ENCODE measurements at regions of chrX and their contacts with region 1.

Region 1: DNA sequence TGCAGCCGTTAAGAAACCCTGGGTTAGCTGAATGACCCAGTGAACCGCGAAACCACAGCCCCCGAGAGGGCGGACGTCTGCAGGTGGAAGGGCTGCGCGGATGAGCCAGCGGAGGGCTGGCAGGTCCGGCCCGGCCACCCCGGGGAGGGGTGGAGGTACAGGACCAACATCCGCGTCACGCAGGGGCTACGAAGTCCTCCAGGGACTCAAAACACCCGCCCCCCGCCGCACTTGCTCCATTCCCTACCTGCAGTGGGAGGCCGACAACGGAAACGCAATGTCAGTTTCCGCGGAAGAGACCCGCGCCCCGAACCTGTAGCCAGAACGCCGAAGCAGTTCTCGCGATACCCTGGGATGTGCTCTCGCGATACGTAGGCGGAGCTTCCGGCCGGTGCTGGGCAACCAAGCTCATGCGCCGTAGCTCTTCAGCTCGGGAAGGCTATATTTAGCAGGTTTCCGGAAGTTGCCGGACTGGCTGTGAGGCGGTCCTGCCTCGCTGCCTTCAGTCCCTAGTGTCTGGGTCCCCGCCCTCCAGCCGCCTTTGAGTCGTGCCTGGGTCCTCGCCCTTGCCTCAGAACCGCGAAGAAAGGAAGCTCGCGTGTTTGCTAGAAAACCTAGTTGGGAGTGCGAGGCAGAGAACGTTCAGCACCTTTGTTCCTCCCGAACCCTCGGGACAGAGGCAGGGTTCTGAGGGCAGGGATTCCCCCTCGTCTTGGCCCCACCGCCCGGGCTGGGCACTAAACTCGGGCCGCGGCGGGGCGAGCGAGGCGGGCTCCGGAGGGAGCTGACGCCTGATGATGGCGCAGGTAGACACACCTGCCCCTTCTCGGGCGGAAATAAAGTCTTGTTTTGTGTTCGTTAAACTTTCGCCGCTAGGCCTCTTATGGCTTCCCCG is at the starts of genes OFD1 and TRAPPC2:
- DNase-seq: peak; percentile 92
- H3K4me3 Mint-ChIP-seq: peak within 1 kb of the TSS; percentile 90
- H3K27ac Mint-ChIP-seq: peak within 1 kb of the TSS; percentile 96
- H3K4me1 Mint-ChIP-seq: peaks cover 51% of the 10 kb centered on the region
- H3K27me3 Mint-ChIP-seq: no peaks in the 10 kb centered on the region
- total RNA-seq, gene OFD1: 41.3 to 47.3 TPM
- total RNA-seq, gene TRAPPC2: 21.0 to 22.6 TPM

Region 2: GRCh38 chrX:13620207-13620606 is 114.3 kb before region 1 on chrX:
- CTCF ChIA-PET with region 1: no interaction called
- POLR2A ChIA-PET with region 1: no interaction called
- DNase-seq: no peak
- H3K4me3 Mint-ChIP-seq: no peak overlapping the region
- H3K27ac Mint-ChIP-seq: no peak overlapping the region
- H3K4me1 Mint-ChIP-seq: peaks cover under 1% of the 10 kb centered on the region
- H3K27me3 Mint-ChIP-seq: peaks cover 4% of the 10 kb centered on the region

Region 3: DNA sequence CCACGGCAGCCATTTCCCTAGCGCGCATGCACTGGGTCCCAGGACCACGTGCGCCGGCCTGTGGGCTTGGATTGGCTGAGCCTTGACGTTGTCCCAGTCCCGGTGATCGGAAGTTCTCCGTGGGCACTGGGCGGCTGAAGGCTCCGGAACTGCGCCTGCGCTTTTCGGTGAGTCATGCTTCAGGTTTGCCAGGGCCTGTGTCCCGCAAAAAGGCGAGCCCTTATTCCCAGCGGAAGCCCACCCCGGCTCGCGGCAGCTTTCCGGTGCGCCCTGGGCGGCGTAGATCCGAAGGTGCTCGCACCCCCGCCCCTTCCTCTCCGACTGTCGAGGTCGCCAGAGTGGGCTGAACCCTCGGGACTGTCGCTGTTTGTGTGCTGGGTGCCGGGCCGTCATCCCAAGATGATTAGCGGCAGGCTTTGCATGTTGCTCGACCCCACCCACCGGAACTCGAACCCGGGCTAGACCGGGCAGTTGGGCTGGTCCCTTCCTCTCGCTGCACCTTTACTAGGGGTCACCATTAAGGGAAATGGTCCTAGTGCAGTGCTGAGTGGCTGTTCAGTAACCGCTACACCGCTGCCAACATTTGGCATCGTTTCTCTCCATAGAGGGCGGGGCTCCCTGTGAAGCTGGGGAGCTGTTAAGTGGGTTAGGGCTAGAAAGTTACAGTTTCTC is 81.4 kb before region 1 on chrX and contains the start of gene TCEANC:
- CTCF ChIA-PET with region 1: interaction called, 3 read pairs
- POLR2A ChIA-PET with region 1: interaction called, 15 read pairs
- DNase-seq: peak; percentile 94
- H3K4me3 Mint-ChIP-seq: peak within 1 kb of the TSS; percentile 85
- H3K27ac Mint-ChIP-seq: peak within 1 kb of the TSS; percentile 96
- H3K4me1 Mint-ChIP-seq: peaks cover 28% of the 10 kb centered on the region
- H3K27me3 Mint-ChIP-seq: no peaks in the 10 kb centered on the region
- total RNA-seq, gene TCEANC: 4.3 to 4.6 TPM

Region 4: DNA sequence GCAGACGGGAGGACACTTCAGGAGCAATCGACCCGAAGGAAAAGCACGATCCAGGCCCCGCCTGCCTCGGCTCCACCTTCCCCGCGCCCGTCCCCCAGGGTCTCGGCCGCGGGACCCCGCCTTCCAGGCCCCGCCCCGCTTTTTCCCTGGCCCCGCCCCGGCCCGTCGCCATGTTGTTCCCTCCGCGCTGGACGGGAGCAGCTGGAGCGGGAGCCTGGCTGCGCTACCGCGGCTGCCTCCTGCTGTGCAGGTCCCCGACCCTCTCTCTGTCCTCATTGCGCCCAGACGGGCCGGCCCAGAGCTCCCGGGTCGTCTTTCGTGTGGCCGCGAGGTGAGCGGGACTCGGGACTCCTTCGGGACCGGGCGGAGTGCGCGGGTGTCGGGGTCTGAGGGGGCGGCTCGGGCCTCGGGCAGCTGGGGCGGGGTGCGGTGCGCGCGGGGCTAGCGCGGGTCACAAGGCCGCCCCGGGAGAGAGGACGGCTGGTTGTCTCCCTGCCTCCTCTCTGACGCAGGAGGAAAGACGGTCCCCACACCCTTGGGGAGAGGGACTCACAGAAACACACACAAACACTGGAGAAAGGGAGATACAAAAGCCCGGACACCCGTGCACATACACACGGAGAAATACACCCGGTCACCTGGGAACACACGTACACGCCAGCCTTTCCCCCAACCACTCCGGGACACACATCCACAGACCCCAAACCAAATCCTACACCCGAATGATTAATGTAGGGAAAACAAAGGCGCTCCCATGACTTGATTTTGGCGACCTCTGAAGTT is 45.4 kb before region 1 on chrX and contains the start of gene RAB9A:
- CTCF ChIA-PET with region 1: interaction called, 3 read pairs
- POLR2A ChIA-PET with region 1: interaction called, 45 read pairs
- DNase-seq: peak; percentile 78
- H3K4me3 Mint-ChIP-seq: peak within 1 kb of the TSS; percentile 82
- H3K27ac Mint-ChIP-seq: peak within 1 kb of the TSS; percentile 75
- H3K4me1 Mint-ChIP-seq: peaks cover 54% of the 10 kb centered on the region
- H3K27me3 Mint-ChIP-seq: no peaks in the 10 kb centered on the region
- total RNA-seq, gene RAB9A: 16.8 to 17.5 TPM

Region 5: DNA sequence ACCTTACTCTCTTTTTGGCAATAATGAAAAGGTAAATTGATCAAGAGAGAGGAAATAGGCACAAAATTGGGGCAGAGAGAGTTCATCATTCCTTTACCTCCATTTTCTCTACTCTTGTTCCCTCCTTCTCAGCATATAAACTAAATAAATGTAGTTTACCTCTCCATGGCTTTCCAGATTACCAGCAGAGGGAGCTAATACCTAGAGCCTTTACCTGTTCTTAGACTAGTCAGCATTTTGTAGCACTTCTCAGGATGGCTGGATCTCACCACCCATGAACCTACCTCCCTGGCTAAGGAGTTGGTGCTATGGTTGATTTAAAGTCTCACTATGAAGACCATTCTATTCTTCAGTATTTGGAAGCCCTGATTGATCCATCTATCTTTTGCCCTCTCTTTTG is 15.7 kb after region 1 on chrX:
- CTCF ChIA-PET with region 1: interaction called, 18 read pairs
- POLR2A ChIA-PET with region 1: interaction called, 15 read pairs
- DNase-seq: no peak
- H3K4me3 Mint-ChIP-seq: no peak overlapping the region
- H3K27ac Mint-ChIP-seq: no peak overlapping the region
- H3K4me1 Mint-ChIP-seq: peaks cover 33% of the 10 kb centered on the region
- H3K27me3 Mint-ChIP-seq: no peaks in the 10 kb centered on the region

Region 6: DNA sequence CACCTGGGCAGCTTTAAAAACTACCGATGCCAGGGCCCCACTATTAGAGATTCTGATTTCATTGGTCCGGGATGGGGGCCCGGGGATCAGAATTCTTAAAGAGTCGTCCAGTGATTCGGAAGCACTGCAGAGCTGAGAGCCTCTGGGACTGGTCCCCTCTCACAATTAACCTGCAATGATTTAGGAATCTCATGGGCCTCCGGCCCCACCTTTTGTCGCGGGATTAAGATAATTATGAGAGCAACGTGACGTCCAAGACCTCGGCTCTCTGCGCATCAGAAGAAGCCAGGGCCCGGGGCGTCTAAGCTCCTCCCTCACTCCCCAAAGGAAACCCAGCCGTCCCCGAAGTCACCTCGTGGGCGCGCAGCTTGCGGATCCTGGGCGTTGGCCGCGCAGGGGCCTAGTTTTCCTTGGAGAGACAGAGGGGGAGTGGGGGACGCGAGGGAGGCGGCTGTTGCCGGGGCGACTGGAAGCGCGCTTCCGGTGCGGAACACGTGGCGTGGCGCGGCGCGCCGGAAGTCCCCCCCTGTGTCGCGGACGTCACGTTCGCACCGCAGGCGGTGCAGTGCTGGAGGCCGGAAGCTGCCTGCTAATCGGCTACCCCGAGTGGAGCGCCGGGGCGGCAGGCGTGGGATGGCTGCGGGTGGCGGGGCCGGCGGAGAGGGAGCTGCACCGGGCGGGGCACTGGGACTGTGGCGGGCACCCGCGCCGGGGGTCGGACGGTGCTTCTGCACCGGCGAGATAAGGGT is 295.1 kb after region 1 on chrX and contains the start of gene GEMIN8:
- CTCF ChIA-PET with region 1: interaction called, 3 read pairs
- POLR2A ChIA-PET with region 1: interaction called, 23 read pairs
- DNase-seq: peak; percentile 86
- H3K4me3 Mint-ChIP-seq: peak within 1 kb of the TSS; percentile 99
- H3K27ac Mint-ChIP-seq: peak within 1 kb of the TSS; percentile 98
- H3K4me1 Mint-ChIP-seq: peaks cover 47% of the 10 kb centered on the region
- H3K27me3 Mint-ChIP-seq: peaks cover 4% of the 10 kb centered on the region
- total RNA-seq, gene GEMIN8: 14.3 to 16.0 TPM